ENCODE measurements at regions of chr2 and their contacts with region 1.

Region 1: DNA sequence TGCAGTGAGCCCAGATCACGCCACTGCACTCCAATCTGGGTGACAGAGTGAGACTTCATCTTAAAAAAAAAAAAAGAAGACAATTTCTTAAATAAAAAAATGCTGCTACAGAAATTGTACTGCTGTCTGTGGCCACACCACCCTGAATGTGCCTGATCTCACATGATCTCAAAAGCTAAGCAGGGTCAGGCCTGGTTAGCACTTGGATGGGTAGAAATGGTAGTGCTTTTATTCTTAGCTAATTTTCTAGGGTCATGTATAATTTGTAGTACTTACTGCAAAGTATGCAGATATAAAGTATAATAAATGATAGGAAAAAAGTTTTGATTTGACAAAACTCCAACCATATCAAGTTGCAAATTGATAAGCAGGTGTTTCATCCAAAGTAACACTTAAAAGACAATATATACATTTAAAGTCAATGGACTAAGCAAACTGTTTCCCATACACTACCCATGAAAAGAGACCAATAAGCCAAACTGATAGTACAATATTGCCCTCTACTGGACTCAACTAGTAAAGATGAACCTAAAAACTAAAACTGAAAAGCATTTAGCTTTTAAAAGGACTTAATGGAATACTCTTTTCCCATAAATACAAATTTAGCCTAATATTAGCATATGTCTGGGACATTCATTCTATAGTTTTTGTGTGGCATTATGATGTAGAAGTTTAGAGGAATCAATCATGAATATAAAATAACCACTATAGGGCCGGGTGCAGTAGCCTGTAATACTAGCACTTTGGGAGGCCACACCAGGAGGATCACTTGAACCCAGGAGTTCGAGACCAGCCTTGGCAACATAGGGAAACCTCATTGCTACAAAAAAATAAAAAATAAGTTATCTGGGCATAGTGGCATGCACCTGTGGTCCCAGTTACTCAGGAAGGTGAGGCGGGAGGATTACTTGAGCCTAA is 18.6 kb upstream of the PEX13 start:
- DNase-seq: no peak
- ATAC-seq: peak; percentile 69
- H3K4me3 Mint-ChIP-seq: no peak overlapping the region
- H3K27ac Mint-ChIP-seq: no peak overlapping the region
- H3K4me1 Mint-ChIP-seq: peaks cover 4% of the 10 kb centered on the region
- H3K27me3 Mint-ChIP-seq: no peaks in the 10 kb centered on the region

Region 2: DNA sequence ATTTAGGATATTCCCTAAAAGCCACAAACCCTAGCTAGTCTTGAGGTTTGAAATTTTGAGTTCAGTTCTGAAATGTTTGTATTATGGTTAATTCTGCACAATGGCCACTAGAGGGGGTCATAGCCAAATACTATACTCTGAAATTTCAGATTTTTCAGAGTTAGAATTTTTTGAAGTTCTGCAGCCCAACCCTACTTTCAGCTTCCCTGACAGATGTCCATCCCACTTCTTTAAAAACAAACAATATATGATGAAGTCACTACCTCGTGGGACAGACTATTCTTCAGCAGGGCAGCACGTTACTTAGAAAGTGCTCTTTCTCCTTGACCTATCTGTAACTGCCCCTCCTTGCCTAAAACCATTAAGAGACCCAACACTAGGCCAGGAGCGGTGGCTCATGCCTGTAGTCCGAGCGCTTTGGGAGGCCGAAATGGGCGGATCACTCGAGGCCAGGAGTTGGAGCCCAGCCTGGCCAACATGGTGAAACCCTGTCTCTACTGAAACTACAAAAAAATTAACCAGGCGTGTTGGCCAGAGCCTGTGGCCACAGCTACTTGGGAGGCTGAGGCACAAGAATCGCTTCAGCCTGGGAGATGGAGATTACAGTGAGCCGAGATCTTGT is 291.0 kb before region 1 on chr2:
- CTCF ChIA-PET with region 1: interaction called, 61 read pairs
- DNase-seq: no peak
- ATAC-seq: peak; percentile 64
- H3K4me3 Mint-ChIP-seq: no peak overlapping the region
- H3K27ac Mint-ChIP-seq: no peak overlapping the region
- H3K4me1 Mint-ChIP-seq: no peaks in the 10 kb centered on the region
- H3K27me3 Mint-ChIP-seq: peaks cover 8% of the 10 kb centered on the region

Region 3: DNA sequence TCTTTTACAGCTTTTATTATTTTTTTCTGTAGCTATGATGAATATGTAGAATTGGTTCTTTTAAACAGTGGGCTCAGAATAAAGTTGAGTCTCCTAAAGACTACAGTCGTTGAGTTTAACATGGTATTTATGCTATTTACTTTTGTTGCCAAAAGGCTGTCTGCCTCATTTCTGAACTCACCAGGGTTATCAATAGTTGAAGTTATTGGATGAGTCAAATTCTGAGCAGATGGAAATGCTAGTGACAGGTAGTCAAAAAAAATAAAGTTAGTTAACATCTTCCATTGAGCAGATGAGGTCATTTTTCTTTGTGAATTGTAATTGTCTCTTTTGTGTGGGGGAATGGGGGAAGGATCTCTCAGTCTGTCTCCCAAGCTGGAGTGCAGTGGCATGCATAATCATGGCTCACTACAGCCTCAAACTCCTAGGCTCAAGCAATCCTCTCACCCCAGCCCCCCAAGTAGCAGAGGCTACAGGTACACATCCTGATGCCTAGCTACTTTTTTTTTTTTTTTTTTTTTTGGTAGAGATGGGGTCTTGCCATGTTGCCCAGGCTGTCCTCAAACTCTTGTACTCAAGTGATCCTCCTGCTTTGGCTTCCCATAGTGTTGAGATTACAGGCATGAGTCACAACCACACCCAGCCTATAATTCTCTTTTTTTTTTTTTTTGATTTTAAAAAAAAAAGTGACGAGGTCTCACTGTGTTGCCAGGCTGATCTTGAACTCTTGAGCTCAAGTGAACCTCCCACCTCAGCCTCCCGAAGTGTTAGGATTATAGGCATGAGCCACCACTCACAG is 234.0 kb before region 1 on chr2:
- CTCF ChIA-PET with region 1: interaction called, 12 read pairs
- DNase-seq: no peak
- ATAC-seq: no peak
- H3K4me3 Mint-ChIP-seq: no peak overlapping the region
- H3K27ac Mint-ChIP-seq: no peak overlapping the region
- H3K4me1 Mint-ChIP-seq: peaks cover 11% of the 10 kb centered on the region
- H3K27me3 Mint-ChIP-seq: no peaks in the 10 kb centered on the region

Region 4: GRCh38 chr2:60794277-60794863 is 204.5 kb before region 1 on chr2:
- CTCF ChIA-PET with region 1: interaction called, 15 read pairs
- DNase-seq: no peak
- ATAC-seq: no peak
- H3K4me3 Mint-ChIP-seq: no peak overlapping the region
- H3K27ac Mint-ChIP-seq: no peak overlapping the region
- H3K4me1 Mint-ChIP-seq: peaks cover 16% of the 10 kb centered on the region
- H3K27me3 Mint-ChIP-seq: no peaks in the 10 kb centered on the region

Region 5: DNA sequence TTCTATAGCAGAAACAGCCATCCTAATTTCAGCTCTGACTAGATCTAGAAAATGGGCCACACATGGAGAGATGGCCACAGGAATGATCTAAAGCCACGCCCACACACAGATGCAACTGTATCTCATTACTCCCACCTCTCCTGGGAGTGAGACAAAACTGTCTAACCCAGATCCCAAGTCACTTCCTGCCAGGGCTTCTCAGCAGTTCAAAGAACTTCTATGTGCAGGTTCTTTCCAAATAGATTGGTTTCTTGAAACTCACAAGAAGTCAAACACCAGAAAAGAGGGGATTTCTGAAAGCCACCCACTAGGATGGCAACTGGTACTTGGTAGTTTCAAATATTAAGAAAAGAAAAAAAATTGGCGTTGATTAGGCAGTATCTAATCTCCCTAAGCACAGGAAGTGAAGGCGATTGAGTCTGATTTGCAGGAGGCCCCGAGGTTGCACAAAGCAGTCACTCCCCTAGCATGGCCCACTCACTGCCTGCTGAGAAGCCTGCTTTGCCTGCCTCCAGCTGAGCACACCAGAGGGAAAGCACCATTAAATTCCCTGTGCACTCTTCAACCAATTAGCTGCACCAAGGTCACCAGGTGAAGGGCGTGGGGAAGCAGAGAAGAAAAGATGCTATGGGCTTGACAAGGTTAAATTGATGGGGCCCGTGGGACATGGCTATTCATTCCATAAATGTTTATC is 191.8 kb before region 1 on chr2:
- CTCF ChIA-PET with region 1: interaction called, 28 read pairs
- DNase-seq: peak; percentile 47
- ATAC-seq: peak; percentile 69
- H3K4me3 Mint-ChIP-seq: no peak overlapping the region
- H3K27ac Mint-ChIP-seq: peak overlapping the region; percentile 53
- H3K4me1 Mint-ChIP-seq: peaks cover 14% of the 10 kb centered on the region
- H3K27me3 Mint-ChIP-seq: no peaks in the 10 kb centered on the region

Region 6: GRCh38 chr2:60818272-60818671 is 180.6 kb before region 1 on chr2:
- CTCF ChIA-PET with region 1: interaction called, 25 read pairs
- DNase-seq: peak; percentile 48
- ATAC-seq: no peak
- H3K4me3 Mint-ChIP-seq: no peak overlapping the region
- H3K27ac Mint-ChIP-seq: peak overlapping the region; percentile 20
- H3K4me1 Mint-ChIP-seq: peaks cover 34% of the 10 kb centered on the region
- H3K27me3 Mint-ChIP-seq: no peaks in the 10 kb centered on the region

Region 7: DNA sequence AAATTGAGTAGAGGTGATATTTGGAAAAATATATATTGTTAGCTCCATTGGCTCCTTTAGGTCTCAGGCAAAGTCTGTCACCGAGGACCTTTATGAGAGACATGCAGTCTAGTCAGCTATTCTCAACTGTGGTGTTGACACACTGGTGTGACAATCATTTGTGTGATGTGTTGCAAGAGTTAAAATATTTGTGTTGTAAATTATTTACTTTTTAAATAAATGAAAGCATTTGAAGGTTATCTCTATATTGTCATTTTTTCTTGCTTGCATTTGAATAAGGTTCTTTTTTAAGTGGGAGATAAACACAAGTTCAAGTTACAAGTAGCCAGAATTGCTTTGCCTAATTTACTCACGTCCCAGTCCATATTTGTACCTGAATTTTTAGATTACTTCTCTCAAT is 113.2 kb before region 1 on chr2:
- CTCF ChIA-PET with region 1: interaction called, 14 read pairs
- DNase-seq: no peak
- ATAC-seq: no peak
- H3K4me3 Mint-ChIP-seq: peak overlapping the region; percentile 61
- H3K27ac Mint-ChIP-seq: peak overlapping the region; percentile 80
- H3K4me1 Mint-ChIP-seq: peaks cover 44% of the 10 kb centered on the region
- H3K27me3 Mint-ChIP-seq: no peaks in the 10 kb centered on the region

Region 8: DNA sequence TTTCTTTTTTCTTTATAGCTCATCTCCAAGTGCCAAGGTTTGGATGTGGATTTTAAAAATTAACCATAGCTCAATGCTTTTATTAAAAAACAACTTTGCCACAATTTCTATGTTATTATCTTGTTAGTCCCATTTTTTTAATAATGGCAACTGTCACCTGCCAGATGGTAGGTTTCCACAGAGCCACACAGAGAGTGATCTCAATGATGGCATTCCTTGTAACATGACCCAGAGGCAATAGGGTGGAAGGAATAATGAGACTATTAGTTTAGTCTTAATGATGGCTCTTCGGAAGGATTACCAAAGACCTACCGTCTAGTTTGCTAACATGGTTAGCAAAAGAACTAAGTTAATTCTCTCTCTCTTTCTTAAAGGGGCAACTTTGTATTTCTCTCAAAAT is 53.5 kb before region 1 on chr2:
- CTCF ChIA-PET with region 1: no interaction called
- DNase-seq: no peak
- ATAC-seq: no peak
- H3K4me3 Mint-ChIP-seq: no peak overlapping the region
- H3K27ac Mint-ChIP-seq: no peak overlapping the region
- H3K4me1 Mint-ChIP-seq: peaks cover 14% of the 10 kb centered on the region
- H3K27me3 Mint-ChIP-seq: no peaks in the 10 kb centered on the region

Region 9: GRCh38 chr2:61023670-61024069 is 24.8 kb after region 1 on chr2:
- CTCF ChIA-PET with region 1: no interaction called
- DNase-seq: no peak
- ATAC-seq: no peak
- H3K4me3 Mint-ChIP-seq: no peak overlapping the region
- H3K27ac Mint-ChIP-seq: no peak overlapping the region
- H3K4me1 Mint-ChIP-seq: peaks cover 16% of the 10 kb centered on the region
- H3K27me3 Mint-ChIP-seq: no peaks in the 10 kb centered on the region

Region 10: DNA sequence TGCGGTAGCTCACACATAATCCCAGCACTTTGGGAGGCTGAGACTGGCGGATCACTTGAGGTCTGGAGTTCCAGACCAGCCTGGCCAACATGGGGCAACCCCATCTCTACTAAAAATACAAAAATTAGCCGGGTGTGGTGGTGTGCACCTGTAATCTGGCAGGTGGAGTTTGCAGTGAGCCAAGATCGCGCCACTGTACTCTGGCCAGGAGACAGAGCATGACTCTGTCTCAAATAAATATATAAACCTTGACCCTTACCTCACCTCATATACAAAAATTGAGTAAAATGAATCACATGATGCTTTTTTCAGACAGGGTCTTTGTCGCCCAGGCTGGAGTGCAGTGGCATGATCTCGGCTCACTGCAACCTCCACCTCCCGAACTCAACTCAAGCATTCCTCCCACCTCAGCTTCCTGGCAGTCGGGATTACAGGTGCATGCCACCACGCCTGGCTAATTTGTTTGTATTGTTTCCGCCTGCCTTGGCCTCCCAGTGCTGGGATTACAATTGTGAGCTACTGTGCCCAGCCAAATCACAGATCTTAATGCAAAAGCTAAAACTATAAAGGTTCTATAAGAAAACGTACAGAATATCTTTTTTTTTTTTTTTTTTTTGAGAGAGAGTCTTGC is 514.0 kb after region 1 on chr2:
- CTCF ChIA-PET with region 1: no interaction called
- DNase-seq: no peak
- ATAC-seq: no peak
- H3K4me3 Mint-ChIP-seq: no peak overlapping the region
- H3K27ac Mint-ChIP-seq: no peak overlapping the region
- H3K4me1 Mint-ChIP-seq: peaks cover 8% of the 10 kb centered on the region
- H3K27me3 Mint-ChIP-seq: no peaks in the 10 kb centered on the region